ENCODE measurements at regions of chr6 and their contacts with region 1.

Region 1: DNA sequence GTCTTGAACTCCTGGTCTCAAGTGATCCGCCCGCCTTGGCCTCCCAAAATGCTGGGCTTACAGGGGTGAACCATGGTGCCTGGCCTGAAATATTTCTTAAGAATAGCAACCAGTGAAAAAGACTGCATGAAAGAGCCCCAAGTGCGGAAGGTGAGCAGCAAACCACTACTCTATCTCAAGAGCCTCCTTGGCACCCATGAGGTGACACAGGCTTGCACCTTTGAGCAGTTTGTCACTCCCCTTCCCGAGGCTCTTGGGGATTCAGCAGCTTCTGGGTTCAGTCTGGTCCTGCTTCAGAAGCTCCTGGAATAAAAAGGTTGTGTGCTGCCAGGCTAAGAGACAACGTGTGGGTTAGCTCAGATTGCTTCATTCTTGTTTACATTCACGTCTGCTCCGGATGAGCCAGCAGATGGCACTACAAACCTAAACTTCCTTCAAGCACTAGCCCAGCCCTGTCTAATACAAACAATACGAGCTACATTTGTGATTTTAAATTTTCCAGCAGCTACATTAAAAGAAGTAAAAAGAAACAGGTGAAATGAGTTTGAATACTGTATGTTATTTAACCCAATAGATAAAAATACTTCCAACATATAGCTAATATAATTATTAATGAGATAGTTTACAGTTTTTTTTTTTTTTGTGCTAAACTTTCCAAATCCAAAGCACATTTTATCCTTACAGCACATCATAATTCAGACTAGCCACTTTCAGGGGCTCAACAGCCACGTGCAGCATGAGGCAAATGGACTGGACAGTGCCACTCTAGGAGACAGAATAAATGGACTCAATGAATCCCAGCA is 46.2 kb downstream of the GJA10 start:
- DNase-seq: peak; percentile 60 to 76 (median 66)
- H3K4me3 ChIP-seq: no peak overlapping the region
- H3K4me3 Mint-ChIP-seq: no peak overlapping the region
- H3K27ac ChIP-seq: no peak overlapping the region
- H3K27ac Mint-ChIP-seq: peak overlapping the region in 2 of 7 donors; percentile 30 to 57
- H3K4me1 ChIP-seq: no peaks in the 10 kb centered on the region
- H3K4me1 Mint-ChIP-seq: peaks cover 3% of the 10 kb centered on the region
- H3K27me3 ChIP-seq: no peaks in the 10 kb centered on the region
- H3K27me3 Mint-ChIP-seq: peaks cover 0 to 3% (median 0%) of the 10 kb centered on the region in 3 donors
- CTCF ChIP-seq: peak; percentile 76

Region 2: GRCh38 chr6:89927791-89928550 is 12.5 kb before region 1 on chr6:
- intact Hi-C with region 1: no loop called
- DNase-seq: peak; percentile 56 to 70 (median 63)
- H3K4me3 ChIP-seq: peak overlapping the region in 1 of 3 experiments; percentile 38
- H3K4me3 Mint-ChIP-seq: peak overlapping the region in 1 of 2 donors; percentile 28
- H3K27ac ChIP-seq: peak overlapping the region in 1 of 2 donors; percentile 80
- H3K27ac Mint-ChIP-seq: peak overlapping the region; percentile 68 to 88 (median 83)
- H3K4me1 ChIP-seq: peaks cover 40 to 43% of the 10 kb centered on the region in 2 donors
- H3K4me1 Mint-ChIP-seq: peaks cover 50% of the 10 kb centered on the region
- H3K27me3 ChIP-seq: no peaks in the 10 kb centered on the region
- H3K27me3 Mint-ChIP-seq: peaks cover 0 to 5% (median 2%) of the 10 kb centered on the region in 3 donors
- CTCF ChIP-seq: no peak

Region 3: GRCh38 chr6:90179190-90180169 is 239.1 kb after region 1 on chr6:
- intact Hi-C with region 1: loop called in 1 of 2 experiments (anchors 5 kb)
- DNase-seq: peak in 2 of 3 donors; percentile 24
- H3K4me3 ChIP-seq: no peak overlapping the region
- H3K4me3 Mint-ChIP-seq: no peak overlapping the region
- H3K27ac ChIP-seq: no peak overlapping the region
- H3K27ac Mint-ChIP-seq: no peak overlapping the region
- H3K4me1 ChIP-seq: peaks cover 35 to 37% of the 10 kb centered on the region in 2 donors
- H3K4me1 Mint-ChIP-seq: peaks cover 44% of the 10 kb centered on the region
- H3K27me3 ChIP-seq: no peaks in the 10 kb centered on the region
- H3K27me3 Mint-ChIP-seq: peaks cover 0 to 1% (median 1%) of the 10 kb centered on the region in 3 donors
- CTCF ChIP-seq: peak; percentile 82

Region 4: DNA sequence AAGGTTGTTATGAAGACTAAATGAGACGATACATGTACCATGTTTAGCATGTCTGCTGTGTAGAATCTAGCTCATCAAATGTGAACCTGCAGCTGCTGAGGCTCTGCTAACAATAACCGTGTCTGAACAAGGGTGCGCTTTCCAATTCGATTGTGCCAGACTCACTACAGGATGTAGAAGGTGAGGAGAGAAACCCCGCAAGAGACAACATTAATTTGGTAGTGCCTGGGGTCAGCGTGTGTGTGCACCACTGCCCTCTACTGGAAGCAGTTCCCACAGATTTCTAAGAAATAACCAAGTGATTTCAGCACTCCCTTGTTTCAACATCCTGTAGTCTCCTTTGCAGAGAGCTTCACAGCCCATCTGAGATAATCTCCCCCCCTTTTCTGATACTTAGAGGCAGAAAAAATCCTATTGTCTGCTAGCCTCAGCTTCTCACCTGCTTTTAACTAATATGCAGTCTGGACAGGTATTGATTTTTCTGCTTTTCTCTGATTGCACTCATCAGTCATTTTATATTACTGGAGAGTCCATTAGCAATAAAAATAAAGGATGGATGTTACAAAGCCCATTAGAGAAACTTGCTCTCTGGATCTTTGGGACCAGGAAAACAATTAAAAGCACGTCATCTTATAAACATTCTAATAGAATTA is 452.9 kb after region 1 on chr6:
- intact Hi-C with region 1: loop called (anchors 5 kb)
- DNase-seq: peak; percentile 40 to 73 (median 52)
- H3K4me3 ChIP-seq: no peak overlapping the region
- H3K4me3 Mint-ChIP-seq: no peak overlapping the region
- H3K27ac ChIP-seq: no peak overlapping the region
- H3K27ac Mint-ChIP-seq: no peak overlapping the region
- H3K4me1 ChIP-seq: no peaks in the 10 kb centered on the region
- H3K4me1 Mint-ChIP-seq: peaks cover 2% of the 10 kb centered on the region
- H3K27me3 ChIP-seq: no peaks in the 10 kb centered on the region
- H3K27me3 Mint-ChIP-seq: peaks cover 0 to 5% (median 3%) of the 10 kb centered on the region in 3 donors
- CTCF ChIP-seq: peak; percentile 75

Region 5: GRCh38 chr6:90478789-90479602 is 538.6 kb after region 1 on chr6:
- intact Hi-C with region 1: loop called (anchors 2 to 5 kb)
- DNase-seq: peak; percentile 88 to 97 (median 91)
- H3K4me3 ChIP-seq: no peak overlapping the region
- H3K4me3 Mint-ChIP-seq: no peak overlapping the region
- H3K27ac ChIP-seq: peak overlapping the region in 1 of 2 donors; percentile 28
- H3K27ac Mint-ChIP-seq: peak overlapping the region; percentile 11 to 92 (median 83)
- H3K4me1 ChIP-seq: peaks cover 5 to 9% of the 10 kb centered on the region in 2 donors
- H3K4me1 Mint-ChIP-seq: peaks cover 8% of the 10 kb centered on the region
- H3K27me3 ChIP-seq: no peaks in the 10 kb centered on the region
- H3K27me3 Mint-ChIP-seq: peaks cover 0 to 2% (median 2%) of the 10 kb centered on the region in 3 donors
- CTCF ChIP-seq: peak; percentile 89